Activated CD8-positive, alpha-beta T cell treated with anti-CD3 and anti-CD28 coated beads for 36 hours (primary cell): ENCODE measurements at regions of chr14 and their contacts with region 1.

Region 1: DNA sequence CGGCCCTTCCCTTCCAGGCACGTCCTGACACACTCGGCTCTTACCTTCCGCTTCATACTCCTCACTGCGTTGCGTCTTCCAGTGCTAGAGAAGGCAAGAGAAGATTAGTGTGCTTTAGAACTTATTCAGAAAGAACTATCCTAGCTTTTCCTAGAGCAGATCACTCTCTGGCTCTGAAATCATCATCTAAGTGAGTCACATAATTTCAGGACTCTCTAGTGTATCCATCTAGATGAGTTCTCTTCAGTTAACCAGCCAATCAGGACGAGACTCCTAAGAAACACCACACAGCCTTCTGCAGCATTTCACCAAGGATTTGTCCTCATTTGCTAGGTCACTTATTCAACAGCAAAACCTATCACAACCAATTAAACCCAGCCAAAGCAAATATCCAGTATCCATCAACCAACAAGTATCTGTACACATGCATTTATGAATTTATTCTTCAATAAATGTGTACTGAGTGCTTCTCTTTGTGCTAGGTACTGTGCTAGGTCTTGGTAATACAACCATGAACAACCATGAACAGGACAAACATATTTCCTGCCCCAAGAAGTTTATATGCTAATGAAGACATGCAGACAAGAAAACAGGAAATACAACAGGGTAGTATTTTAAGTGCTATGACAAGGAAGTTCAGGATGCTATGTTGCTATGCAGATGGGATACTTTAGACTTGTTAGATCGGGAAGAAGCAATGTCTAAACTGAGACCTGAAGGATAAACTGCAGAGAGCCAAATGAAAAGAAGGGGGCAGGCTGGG is 52.1 kb downstream of the NIN start:
- DNase-seq: no peak
- ATAC-seq: no peak
- H3K4me3 Mint-ChIP-seq: no peak overlapping the region
- H3K27ac Mint-ChIP-seq: peak overlapping the region; percentile 21
- H3K4me1 Mint-ChIP-seq: peaks cover 67% of the 10 kb centered on the region
- H3K27me3 Mint-ChIP-seq: no peaks in the 10 kb centered on the region
- CTCF ChIP-seq: no peak

Region 2: DNA sequence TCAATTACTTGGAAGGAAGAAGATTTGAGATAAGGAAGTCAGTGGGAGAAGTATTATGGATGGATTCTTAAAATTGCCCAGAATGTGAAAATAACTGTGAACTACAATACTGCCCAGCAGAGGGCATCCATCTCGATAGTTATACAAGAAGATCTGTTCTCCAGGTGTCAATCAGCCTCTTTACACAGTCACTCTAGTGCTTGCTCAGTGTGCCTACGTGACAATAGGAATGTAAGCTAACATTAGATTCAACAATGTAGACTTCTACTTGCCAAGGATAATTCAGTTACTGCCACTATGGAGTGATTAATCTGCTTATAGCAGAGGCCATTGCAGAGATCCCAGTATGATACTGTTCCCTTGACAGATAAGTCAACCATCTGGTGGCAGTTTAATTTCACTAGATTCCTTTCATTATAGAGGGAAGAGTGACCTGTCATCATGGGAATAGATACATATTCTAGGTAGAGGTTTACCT is 235.9 kb before region 1 on chr14:
- CTCF ChIA-PET with region 1: interaction called, 80 read pairs
- POLR2A ChIA-PET with region 1: interaction called, 3 read pairs
- intact Hi-C with region 1: loop called (anchors 5 kb)
- DNase-seq: peak; percentile 68
- ATAC-seq: peak; percentile 95
- H3K4me3 Mint-ChIP-seq: no peak overlapping the region
- H3K27ac Mint-ChIP-seq: peak overlapping the region; percentile 64
- H3K4me1 Mint-ChIP-seq: peaks cover 17% of the 10 kb centered on the region
- H3K27me3 Mint-ChIP-seq: peaks cover 1% of the 10 kb centered on the region
- CTCF ChIP-seq: peak; percentile 82

Region 3: GRCh38 chr14:50599700-50600444 is 179.0 kb before region 1 on chr14:
- CTCF ChIA-PET with region 1: interaction called, 17 read pairs
- POLR2A ChIA-PET with region 1: no interaction called
- intact Hi-C with region 1: loop called (anchors 5 kb)
- DNase-seq: no peak
- ATAC-seq: peak; percentile 39
- H3K4me3 Mint-ChIP-seq: no peak overlapping the region
- H3K27ac Mint-ChIP-seq: no peak overlapping the region
- H3K4me1 Mint-ChIP-seq: no peaks in the 10 kb centered on the region
- H3K27me3 Mint-ChIP-seq: no peaks in the 10 kb centered on the region
- CTCF ChIP-seq: peak; percentile 45

Region 4: GRCh38 chr14:50714450-50715073 is 64.3 kb before region 1 on chr14:
- CTCF ChIA-PET with region 1: interaction called, 27 read pairs
- POLR2A ChIA-PET with region 1: no interaction called
- intact Hi-C with region 1: no loop called
- DNase-seq: peak; percentile 13
- ATAC-seq: peak; percentile 74
- H3K4me3 Mint-ChIP-seq: no peak overlapping the region
- H3K27ac Mint-ChIP-seq: no peak overlapping the region
- H3K4me1 Mint-ChIP-seq: no peaks in the 10 kb centered on the region
- H3K27me3 Mint-ChIP-seq: no peaks in the 10 kb centered on the region
- CTCF ChIP-seq: peak; percentile 42

Region 5: GRCh38 chr14:50736932-50737419 is 41.9 kb before region 1 on chr14:
- CTCF ChIA-PET with region 1: interaction called, 13 read pairs
- POLR2A ChIA-PET with region 1: interaction called, 3 read pairs
- intact Hi-C with region 1: no loop called
- DNase-seq: peak; percentile 80
- ATAC-seq: peak; percentile 94
- H3K4me3 Mint-ChIP-seq: no peak overlapping the region
- H3K27ac Mint-ChIP-seq: peak overlapping the region; percentile 89
- H3K4me1 Mint-ChIP-seq: peaks cover 46% of the 10 kb centered on the region
- H3K27me3 Mint-ChIP-seq: no peaks in the 10 kb centered on the region
- CTCF ChIP-seq: no peak

Region 6: GRCh38 chr14:50804181-50804721 is 25.3 kb after region 1 on chr14:
- CTCF ChIA-PET with region 1: interaction called, 10 read pairs
- POLR2A ChIA-PET with region 1: no interaction called
- intact Hi-C with region 1: no loop called
- DNase-seq: no peak
- ATAC-seq: no peak
- H3K4me3 Mint-ChIP-seq: no peak overlapping the region
- H3K27ac Mint-ChIP-seq: peak overlapping the region; percentile 28
- H3K4me1 Mint-ChIP-seq: peaks cover 51% of the 10 kb centered on the region
- H3K27me3 Mint-ChIP-seq: no peaks in the 10 kb centered on the region
- CTCF ChIP-seq: no peak

Region 7: GRCh38 chr14:50823051-50823761 is 44.3 kb after region 1 on chr14:
- CTCF ChIA-PET with region 1: interaction called, 23 read pairs
- POLR2A ChIA-PET with region 1: interaction called, 3 read pairs
- intact Hi-C with region 1: no loop called
- DNase-seq: peak; percentile 64
- ATAC-seq: peak; percentile 22
- H3K4me3 Mint-ChIP-seq: peak overlapping the region; percentile 71
- H3K27ac Mint-ChIP-seq: peak overlapping the region; percentile 90
- H3K4me1 Mint-ChIP-seq: peaks cover 90% of the 10 kb centered on the region
- H3K27me3 Mint-ChIP-seq: no peaks in the 10 kb centered on the region
- CTCF ChIP-seq: no peak

Region 8: DNA sequence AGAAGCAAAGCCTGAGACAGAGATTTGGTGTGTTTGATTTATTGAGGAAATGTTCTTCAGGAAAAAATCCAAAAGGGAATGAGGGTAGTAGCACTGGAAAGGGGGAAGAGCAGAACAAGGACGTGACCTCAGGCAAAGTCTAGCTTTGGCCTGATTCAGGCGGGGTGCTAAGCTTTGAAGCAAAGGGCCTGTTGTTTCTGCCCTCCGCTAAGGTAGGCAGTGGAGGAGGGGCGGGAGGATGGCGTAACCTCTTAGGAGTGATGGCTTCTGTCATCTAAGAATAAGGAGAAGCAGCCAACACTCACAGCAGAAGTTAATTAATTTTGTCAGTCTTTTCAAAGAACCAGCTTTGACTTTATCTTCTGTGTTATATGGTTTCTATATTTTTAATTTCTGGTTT is 113.4 kb after region 1 on chr14:
- CTCF ChIA-PET with region 1: no interaction called
- POLR2A ChIA-PET with region 1: no interaction called
- intact Hi-C with region 1: no loop called
- DNase-seq: no peak
- ATAC-seq: no peak
- H3K4me3 Mint-ChIP-seq: no peak overlapping the region
- H3K27ac Mint-ChIP-seq: no peak overlapping the region
- H3K4me1 Mint-ChIP-seq: no peaks in the 10 kb centered on the region
- H3K27me3 Mint-ChIP-seq: peaks cover 4% of the 10 kb centered on the region
- CTCF ChIP-seq: no peak

Region 9: DNA sequence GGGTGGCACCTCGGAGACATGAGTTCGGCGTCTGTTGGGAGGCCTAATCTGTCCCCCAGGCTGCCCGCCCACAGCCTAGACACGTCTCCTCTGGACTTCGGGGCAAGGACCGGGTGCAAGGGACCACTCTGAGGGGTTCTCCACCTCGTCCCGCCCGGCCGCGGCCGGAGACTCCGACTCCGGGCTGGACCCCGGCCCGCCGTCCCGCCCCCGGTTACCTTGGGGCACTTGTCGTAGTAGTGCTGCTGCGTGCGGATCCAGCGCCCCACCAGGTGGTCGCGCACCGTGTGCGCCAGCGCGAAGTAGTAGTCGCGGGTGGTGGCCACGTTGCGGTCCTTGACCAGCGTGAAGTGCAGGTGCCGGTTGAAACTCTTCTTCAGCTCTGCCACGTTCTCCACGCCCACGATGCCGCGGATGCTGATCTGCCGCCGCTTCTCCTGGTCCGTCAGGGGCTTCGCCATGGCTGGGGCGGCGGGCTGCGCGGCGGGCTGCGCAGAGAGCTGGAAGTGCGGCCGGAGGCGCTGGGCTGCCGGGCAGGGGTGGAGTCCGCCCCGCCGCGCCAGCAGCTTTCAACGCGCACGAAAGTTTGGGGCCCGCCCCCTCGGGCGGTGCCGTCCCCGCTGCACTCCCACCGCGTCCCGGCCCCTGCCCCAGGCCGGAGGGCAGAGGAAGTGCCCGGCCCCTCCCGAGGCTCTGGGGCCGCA is 165.2 kb after region 1 on chr14 and contains the start of gene PYGL:
- CTCF ChIA-PET with region 1: no interaction called
- POLR2A ChIA-PET with region 1: no interaction called
- intact Hi-C with region 1: no loop called
- DNase-seq: peak; percentile 46
- ATAC-seq: peak; percentile 73
- H3K4me3 Mint-ChIP-seq: peak within 1 kb of the TSS; percentile 76
- H3K27ac Mint-ChIP-seq: peak within 1 kb of the TSS; percentile 43
- H3K4me1 Mint-ChIP-seq: peaks cover 9% of the 10 kb centered on the region
- H3K27me3 Mint-ChIP-seq: peaks cover 30% of the 10 kb centered on the region
- CTCF ChIP-seq: no peak
- total RNA-seq, gene PYGL: 1.6 to 1.7 TPM

Region 10: GRCh38 chr14:51094901-51095853 is 316.3 kb after region 1 on chr14 and contains the start of gene TRIM9:
- CTCF ChIA-PET with region 1: no interaction called
- POLR2A ChIA-PET with region 1: no interaction called
- intact Hi-C with region 1: no loop called
- DNase-seq: peak; percentile 98
- ATAC-seq: peak; percentile 95
- H3K4me3 Mint-ChIP-seq: peak within 1 kb of the TSS; percentile 87
- H3K27ac Mint-ChIP-seq: peak within 1 kb of the TSS; percentile 89
- H3K4me1 Mint-ChIP-seq: peaks cover 17% of the 10 kb centered on the region
- H3K27me3 Mint-ChIP-seq: peaks cover 8% of the 10 kb centered on the region
- CTCF ChIP-seq: no peak
- total RNA-seq, gene TRIM9: 6.5 to 7.2 TPM